ENCODE measurements at regions of chr17 and their contacts with region 1.

Region 1: DNA sequence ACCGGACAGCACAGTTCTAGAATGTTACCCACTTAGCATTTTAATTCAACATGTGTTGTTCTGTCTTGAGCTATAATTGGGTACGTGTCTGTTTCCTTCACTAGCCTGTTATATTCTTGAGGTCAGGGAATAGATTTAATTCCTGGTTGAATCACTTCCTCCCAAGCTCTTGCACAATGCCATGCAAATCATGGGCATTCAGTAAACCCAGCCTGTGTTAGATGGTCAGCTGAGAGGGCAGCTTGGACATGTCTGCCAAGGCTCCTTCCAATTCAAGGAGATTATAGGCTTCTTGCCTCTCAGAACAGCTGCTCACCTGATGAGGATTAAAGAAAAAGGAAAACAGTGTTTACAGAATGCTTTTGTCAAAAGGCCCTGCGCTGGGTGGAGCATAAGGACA is 12.6 kb downstream of the C1QTNF1 start:
- DNase-seq: no peak
- CTCF ChIP-seq: no peak

Region 2: DNA sequence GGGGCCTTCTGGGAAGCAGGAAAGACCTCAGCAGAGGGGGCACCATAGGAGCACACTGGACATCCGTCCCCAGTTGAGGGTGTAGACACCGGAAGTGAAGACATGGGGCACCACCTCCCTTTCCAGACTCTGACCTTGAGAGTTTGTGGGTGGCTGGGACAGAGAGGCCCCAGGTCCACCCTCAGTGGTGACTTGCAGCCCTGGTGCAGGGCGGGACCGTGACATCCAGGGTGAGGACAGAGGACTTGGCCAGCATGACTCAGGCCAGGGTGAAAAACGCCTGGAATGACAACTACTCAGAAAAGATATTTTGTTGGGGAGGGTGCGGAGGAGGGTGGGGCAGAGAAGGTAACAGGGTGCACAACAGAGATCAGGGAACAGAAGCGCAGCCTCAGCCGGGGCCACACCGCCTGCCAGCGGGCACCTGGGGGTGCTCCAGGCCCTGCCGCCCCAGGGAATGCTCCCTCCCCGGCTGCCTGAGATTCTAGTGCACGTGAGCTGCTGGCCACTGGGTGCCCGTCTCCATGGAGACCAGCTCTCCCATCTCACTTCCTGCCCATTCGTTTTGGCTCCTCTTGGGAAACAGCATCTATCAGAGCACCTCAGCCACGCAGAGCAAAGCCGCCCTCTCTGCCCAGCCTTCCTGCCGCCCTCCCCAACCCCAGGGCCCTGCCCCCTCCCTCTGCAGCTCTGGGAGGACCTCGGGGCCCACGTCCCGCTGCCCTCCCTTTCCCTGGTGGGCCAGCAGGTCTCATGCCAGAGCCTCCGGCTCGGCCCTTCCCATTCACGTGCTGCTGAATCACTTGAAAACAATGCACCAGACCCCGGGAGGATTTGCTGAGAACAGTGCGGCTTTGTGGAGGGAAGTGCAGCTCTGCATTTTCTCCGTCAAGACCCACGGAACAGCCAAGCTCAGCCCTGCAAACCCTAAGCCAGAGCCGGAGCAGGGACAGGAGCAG is 153.2 kb before region 1 on chr17:
- CTCF ChIA-PET with region 1: no interaction called
- POLR2A ChIA-PET with region 1: no interaction called
- DNase-seq: no peak
- CTCF ChIP-seq: no peak

Region 3: GRCh38 chr17:79019632-79020584 is 16.7 kb before region 1 on chr17:
- CTCF ChIA-PET with region 1: interaction called, 24 read pairs
- POLR2A ChIA-PET with region 1: no interaction called
- DNase-seq: no peak
- CTCF ChIP-seq: peak; percentile 37

Measured in GM10248 (cell line).